Endothelial cell of umbilical vein (primary cell): ENCODE measurements at regions of chr15 and their contacts with region 1.

Region 1: GRCh38 chr15:40217159-40217824 is 21.6 kb upstream of the PAK6 start:
- DNase-seq: peak; percentile 73
- H3K4me3 ChIP-seq: no peak overlapping the region
- H3K27ac ChIP-seq: no peak overlapping the region
- H3K4me1 ChIP-seq: peaks cover 3% of the 10 kb centered on the region
- H3K27me3 ChIP-seq: no peaks in the 10 kb centered on the region
- CTCF ChIP-seq: peak; percentile 60 to 71
- POLR2A ChIP-seq: no peak

Region 2: DNA sequence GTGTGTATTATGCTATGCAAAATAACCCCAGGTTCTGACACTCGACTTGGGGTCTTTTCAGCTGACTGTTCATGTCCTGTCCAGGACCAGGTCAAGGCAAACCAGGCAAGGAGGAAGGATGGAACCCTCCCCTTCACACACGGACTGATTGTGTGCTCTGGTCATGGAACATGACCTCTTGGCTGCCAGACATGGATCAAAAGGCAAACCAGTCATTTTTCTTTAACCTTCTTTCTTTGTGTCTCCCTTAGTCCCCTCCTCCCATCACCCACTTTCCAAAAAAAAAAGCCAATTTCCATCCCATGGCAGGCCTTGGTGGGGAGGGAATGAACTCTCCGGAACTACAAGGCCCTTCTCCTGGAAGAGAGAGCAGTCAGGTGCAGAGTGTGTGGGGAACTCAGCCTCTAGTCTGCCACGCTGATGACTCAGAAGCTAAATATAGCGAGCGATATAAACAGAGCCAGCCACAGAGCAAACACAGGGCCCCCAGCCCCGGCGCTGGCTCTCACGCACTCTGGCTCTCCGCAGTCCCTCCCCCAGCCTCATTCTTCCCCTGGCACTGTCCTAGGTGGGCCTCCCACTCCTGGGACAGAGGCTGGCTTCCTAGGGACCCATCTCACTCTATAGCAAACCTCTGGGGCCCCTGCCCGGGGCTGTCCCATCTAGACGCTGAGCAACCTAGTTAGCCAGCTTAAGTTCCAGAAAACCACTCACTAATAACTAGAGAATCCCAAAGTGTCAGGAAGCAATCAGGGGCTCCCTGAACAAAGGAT is 118.6 kb before region 1 on chr15:
- CTCF ChIA-PET with region 1: interaction called, 7 read pairs
- POLR2A ChIA-PET with region 1: interaction called, 10 read pairs
- dilution Hi-C with region 1: no loop called
- intact Hi-C with region 1: no loop called
- DNase-seq: peak; percentile 97
- H3K4me3 ChIP-seq: no peak overlapping the region
- H3K27ac ChIP-seq: peak overlapping the region; percentile 91
- H3K4me1 ChIP-seq: peaks cover 46% of the 10 kb centered on the region
- H3K27me3 ChIP-seq: no peaks in the 10 kb centered on the region
- CTCF ChIP-seq: no peak
- POLR2A ChIP-seq: no peak

Region 3: GRCh38 chr15:40204100-40204499 is 13.2 kb before region 1 on chr15:
- CTCF ChIA-PET with region 1: interaction called, 10 read pairs
- POLR2A ChIA-PET with region 1: no interaction called
- dilution Hi-C with region 1: no loop called
- intact Hi-C with region 1: no loop called
- DNase-seq: no peak
- H3K4me3 ChIP-seq: no peak overlapping the region
- H3K27ac ChIP-seq: no peak overlapping the region
- H3K4me1 ChIP-seq: no peaks in the 10 kb centered on the region
- H3K27me3 ChIP-seq: no peaks in the 10 kb centered on the region
- CTCF ChIP-seq: no peak
- POLR2A ChIP-seq: no peak

Region 4: DNA sequence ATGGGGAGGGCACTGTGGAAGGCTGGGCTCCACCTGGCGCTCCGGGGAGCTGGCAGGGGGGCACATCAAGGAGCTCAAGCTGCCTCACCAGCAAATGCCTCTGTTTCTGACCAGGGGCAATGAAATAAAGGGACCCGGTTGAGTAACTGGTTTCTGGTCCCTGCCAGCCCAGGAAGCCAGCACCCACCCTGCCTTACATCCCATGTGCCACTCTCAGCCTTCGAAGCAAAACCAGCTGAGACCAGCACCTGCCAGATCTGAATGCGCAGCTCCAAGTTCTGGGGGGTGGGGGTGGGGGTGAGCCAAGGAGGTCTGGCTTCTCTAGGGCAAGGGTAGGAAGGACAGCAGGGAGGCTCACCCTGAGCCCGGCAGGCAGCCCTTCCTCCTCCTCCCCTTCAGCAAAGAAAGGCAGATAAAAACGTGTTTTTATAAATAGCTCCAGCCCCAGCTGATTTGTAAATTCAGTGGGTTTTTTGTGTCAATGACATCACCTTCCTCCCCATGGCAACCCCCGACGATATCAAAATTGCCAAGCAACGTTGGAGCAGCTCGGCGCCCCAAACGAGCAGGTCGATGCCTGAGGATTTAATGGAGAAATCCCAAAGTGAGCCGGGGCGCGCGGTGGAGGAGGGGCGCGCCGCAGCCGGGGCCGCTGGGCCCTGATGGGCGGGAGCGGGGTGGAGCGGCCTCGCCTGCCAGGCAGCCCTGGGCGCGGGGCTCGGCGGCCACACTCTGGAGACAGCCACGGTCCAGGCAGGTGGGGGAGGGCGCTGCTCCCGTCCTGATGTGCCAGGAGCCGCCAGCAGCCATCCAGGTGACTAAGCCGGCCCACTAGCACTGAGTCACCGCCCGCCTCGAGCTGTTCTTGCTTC is 21.5 kb after region 1 on chr15 and contains the start of gene PAK6:
- CTCF ChIA-PET with region 1: interaction called, 20 read pairs
- POLR2A ChIA-PET with region 1: no interaction called
- dilution Hi-C with region 1: no loop called
- intact Hi-C with region 1: no loop called
- DNase-seq: peak; percentile 11
- H3K4me3 ChIP-seq: peak within 1 kb of the TSS in 2 of 3 experiments; percentile 13 to 37
- H3K27ac ChIP-seq: no peak within 1 kb of the TSS
- H3K4me1 ChIP-seq: peaks cover 4% of the 10 kb centered on the region
- H3K27me3 ChIP-seq: peaks cover 10 to 14% of the 10 kb centered on the region in 2 experiments
- CTCF ChIP-seq: no peak
- POLR2A ChIP-seq: no peak
- total RNA-seq, gene PAK6: not detected in 2 replicates

Region 5: GRCh38 chr15:40249482-40250303 is 32.4 kb after region 1 on chr15:
- CTCF ChIA-PET with region 1: interaction called, 16 read pairs
- POLR2A ChIA-PET with region 1: no interaction called
- dilution Hi-C with region 1: no loop called
- intact Hi-C with region 1: no loop called
- DNase-seq: no peak
- H3K4me3 ChIP-seq: no peak overlapping the region
- H3K27ac ChIP-seq: no peak overlapping the region
- H3K4me1 ChIP-seq: peaks cover 11% of the 10 kb centered on the region
- H3K27me3 ChIP-seq: peaks cover 32 to 33% of the 10 kb centered on the region in 2 experiments
- CTCF ChIP-seq: no peak
- POLR2A ChIP-seq: no peak

Region 6: GRCh38 chr15:40307421-40308211 is 90.3 kb after region 1 on chr15 and contains the start of gene PLCB2:
- CTCF ChIA-PET with region 1: interaction called, 26 read pairs
- POLR2A ChIA-PET with region 1: no interaction called
- dilution Hi-C with region 1: no loop called
- intact Hi-C with region 1: no loop called
- DNase-seq: no peak
- H3K4me3 ChIP-seq: no peak within 1 kb of the TSS
- H3K27ac ChIP-seq: no peak within 1 kb of the TSS
- H3K4me1 ChIP-seq: no peaks in the 10 kb centered on the region
- H3K27me3 ChIP-seq: peaks cover 4 to 5% of the 10 kb centered on the region in 2 experiments
- CTCF ChIP-seq: peak in 1 of 2 donors; percentile 42
- POLR2A ChIP-seq: no peak
- total RNA-seq, gene PLCB2: 1.5 and 4.3 TPM in 2 replicates

Region 7: GRCh38 chr15:40421246-40422157 is 204.2 kb after region 1 on chr15:
- CTCF ChIA-PET with region 1: interaction called, 3 read pairs
- POLR2A ChIA-PET with region 1: no interaction called
- dilution Hi-C with region 1: no loop called
- intact Hi-C with region 1: loop called (anchors 2 kb)
- DNase-seq: peak; percentile 61
- H3K4me3 ChIP-seq: no peak overlapping the region
- H3K27ac ChIP-seq: no peak overlapping the region
- H3K4me1 ChIP-seq: no peaks in the 10 kb centered on the region
- H3K27me3 ChIP-seq: no peaks in the 10 kb centered on the region
- CTCF ChIP-seq: peak; percentile 89 to 99
- POLR2A ChIP-seq: peak; percentile 34